ENCODE measurements at regions of chr2 and their contacts with region 1.

Region 1: GRCh38 chr2:147910990-147911473 is 66.2 kb downstream of the ACVR2A start:
- DNase-seq: peak; percentile 22 to 53 (median 45)
- H3K4me3 ChIP-seq: no peak overlapping the region
- H3K4me3 Mint-ChIP-seq: no peak overlapping the region
- H3K27ac ChIP-seq: no peak overlapping the region
- H3K27ac Mint-ChIP-seq: no peak overlapping the region
- H3K4me1 ChIP-seq: peaks cover 4 to 9% of the 10 kb centered on the region in 2 donors
- H3K4me1 Mint-ChIP-seq: peaks cover 20% of the 10 kb centered on the region
- H3K27me3 ChIP-seq: no peaks in the 10 kb centered on the region
- H3K27me3 Mint-ChIP-seq: no peaks in the 10 kb centered on the region
- CTCF ChIP-seq: peak; percentile 78

Region 2: GRCh38 chr2:147082850-147083522 is 828.0 kb before region 1 on chr2:
- intact Hi-C with region 1: loop called (anchors 5 kb)
- DNase-seq: peak; percentile 5 to 35 (median 12)
- H3K4me3 ChIP-seq: no peak overlapping the region
- H3K4me3 Mint-ChIP-seq: no peak overlapping the region
- H3K27ac ChIP-seq: no peak overlapping the region
- H3K27ac Mint-ChIP-seq: no peak overlapping the region
- H3K4me1 ChIP-seq: no peaks in the 10 kb centered on the region
- H3K4me1 Mint-ChIP-seq: no peaks in the 10 kb centered on the region
- H3K27me3 ChIP-seq: no peaks in the 10 kb centered on the region
- H3K27me3 Mint-ChIP-seq: peaks cover 0 to 5% (median 2%) of the 10 kb centered on the region in 3 donors
- CTCF ChIP-seq: peak; percentile 87

Measured in CD14-positive monocyte (primary cell).